Activated naive CD4-positive, alpha-beta T cell treated with anti-CD3 and anti-CD28 coated beads for 36 hours (primary cell): ENCODE measurements at regions of chr11 and their contacts with region 1.

Region 1: DNA sequence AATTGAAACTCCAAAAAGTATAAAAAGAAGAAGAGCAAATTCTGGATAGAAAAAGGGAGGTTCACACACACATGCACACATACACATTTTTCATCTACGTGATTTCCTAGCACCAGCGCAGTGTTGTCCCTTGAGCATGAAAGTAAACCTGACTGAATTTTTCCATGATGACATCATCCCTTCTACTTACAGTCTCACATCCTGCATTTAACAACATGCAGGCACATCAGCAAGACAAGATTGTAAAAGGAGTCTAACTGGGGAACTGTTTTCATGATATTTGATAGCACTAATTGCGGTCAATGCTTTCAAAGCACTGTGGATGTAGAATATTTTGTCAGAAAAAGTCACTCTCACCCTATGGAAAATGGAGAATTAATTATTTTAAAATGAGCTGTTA is 36.6 kb downstream of the GAS2 start:
- DNase-seq: peak; percentile 57
- H3K4me3 Mint-ChIP-seq: no peak overlapping the region
- H3K27ac Mint-ChIP-seq: peak overlapping the region; percentile 78
- H3K4me1 Mint-ChIP-seq: peaks cover 24% of the 10 kb centered on the region
- H3K27me3 Mint-ChIP-seq: no peaks in the 10 kb centered on the region

Region 2: GRCh38 chr11:22634897-22635629 is 68.0 kb before region 1 on chr11:
- CTCF ChIA-PET with region 1: no interaction called
- intact Hi-C with region 1: no loop called
- DNase-seq: no peak
- H3K4me3 Mint-ChIP-seq: no peak overlapping the region
- H3K27ac Mint-ChIP-seq: no peak overlapping the region
- H3K4me1 Mint-ChIP-seq: no peaks in the 10 kb centered on the region
- H3K27me3 Mint-ChIP-seq: peaks cover 3% of the 10 kb centered on the region

Region 3: GRCh38 chr11:22657101-22657694 is 45.8 kb before region 1 on chr11:
- CTCF ChIA-PET with region 1: interaction called, 3 read pairs
- intact Hi-C with region 1: loop called (anchors 1 kb)
- DNase-seq: peak; percentile 17
- H3K4me3 Mint-ChIP-seq: no peak overlapping the region
- H3K27ac Mint-ChIP-seq: peak overlapping the region; percentile 47
- H3K4me1 Mint-ChIP-seq: peaks cover 18% of the 10 kb centered on the region
- H3K27me3 Mint-ChIP-seq: no peaks in the 10 kb centered on the region

Region 4: DNA sequence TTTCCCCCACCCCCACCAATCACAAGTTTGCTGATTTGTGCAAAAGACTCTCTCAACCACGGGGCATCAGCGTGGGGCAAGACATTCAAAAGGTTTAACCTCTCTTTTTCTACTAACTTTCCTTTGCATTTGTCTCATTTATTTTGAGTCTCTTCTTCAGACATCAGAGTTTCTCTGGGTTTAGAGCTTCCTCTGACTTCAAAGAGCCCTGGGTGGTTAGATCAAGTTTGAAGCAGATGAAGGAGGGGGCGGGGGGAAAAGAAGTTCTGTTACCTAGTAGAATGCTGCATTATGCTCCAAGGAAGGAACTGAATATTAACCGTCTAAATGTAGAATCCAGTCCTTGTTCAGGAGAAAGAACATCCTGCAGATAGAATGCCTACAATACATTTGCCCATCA is 12.2 kb before region 1 on chr11:
- CTCF ChIA-PET with region 1: interaction called, 3 read pairs
- intact Hi-C with region 1: loop called (anchors 1 kb)
- DNase-seq: peak; percentile 55
- H3K4me3 Mint-ChIP-seq: peak overlapping the region; percentile 52
- H3K27ac Mint-ChIP-seq: peak overlapping the region; percentile 65
- H3K4me1 Mint-ChIP-seq: peaks cover 16% of the 10 kb centered on the region
- H3K27me3 Mint-ChIP-seq: no peaks in the 10 kb centered on the region

Region 5: GRCh38 chr11:22730319-22730718 is 27.3 kb after region 1 on chr11:
- CTCF ChIA-PET with region 1: no interaction called
- intact Hi-C with region 1: no loop called
- DNase-seq: peak; percentile 11
- H3K4me3 Mint-ChIP-seq: no peak overlapping the region
- H3K27ac Mint-ChIP-seq: no peak overlapping the region
- H3K4me1 Mint-ChIP-seq: no peaks in the 10 kb centered on the region
- H3K27me3 Mint-ChIP-seq: no peaks in the 10 kb centered on the region

Region 6: DNA sequence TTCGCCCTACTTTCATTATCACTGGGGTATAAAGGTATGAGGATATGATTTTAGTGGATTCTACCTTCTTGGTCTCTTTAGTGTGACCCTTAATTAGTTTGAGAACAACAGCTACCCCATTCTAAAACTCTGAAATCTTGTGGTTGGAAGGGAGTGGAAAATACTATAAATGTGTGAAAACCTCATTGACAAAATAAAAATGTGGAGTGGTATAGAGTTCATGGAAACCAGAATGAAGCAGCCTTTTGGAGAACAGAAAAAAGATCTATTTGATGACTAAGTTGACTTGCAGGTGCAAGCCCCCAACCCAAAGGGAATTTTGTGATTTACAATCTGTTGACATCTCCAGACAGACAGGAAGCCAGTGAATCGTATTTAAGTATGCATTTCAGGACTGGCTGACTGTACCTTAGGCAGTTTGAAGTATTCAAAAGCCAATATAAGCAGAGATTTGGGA is 39.1 kb after region 1 on chr11:
- CTCF ChIA-PET with region 1: no interaction called
- intact Hi-C with region 1: loop called (anchors 1 kb)
- DNase-seq: peak; percentile 11
- H3K4me3 Mint-ChIP-seq: no peak overlapping the region
- H3K27ac Mint-ChIP-seq: peak overlapping the region; percentile 39
- H3K4me1 Mint-ChIP-seq: peaks cover 6% of the 10 kb centered on the region
- H3K27me3 Mint-ChIP-seq: peaks cover 18% of the 10 kb centered on the region

Region 7: GRCh38 chr11:22752908-22753310 is 49.9 kb after region 1 on chr11:
- CTCF ChIA-PET with region 1: no interaction called
- intact Hi-C with region 1: no loop called
- DNase-seq: no peak
- H3K4me3 Mint-ChIP-seq: no peak overlapping the region
- H3K27ac Mint-ChIP-seq: no peak overlapping the region
- H3K4me1 Mint-ChIP-seq: peaks cover 8% of the 10 kb centered on the region
- H3K27me3 Mint-ChIP-seq: no peaks in the 10 kb centered on the region

Region 8: GRCh38 chr11:22920939-22921565 is 218.0 kb after region 1 on chr11:
- CTCF ChIA-PET with region 1: no interaction called
- intact Hi-C with region 1: no loop called
- DNase-seq: peak; percentile 19
- H3K4me3 Mint-ChIP-seq: no peak overlapping the region
- H3K27ac Mint-ChIP-seq: no peak overlapping the region
- H3K4me1 Mint-ChIP-seq: peaks cover 6% of the 10 kb centered on the region
- H3K27me3 Mint-ChIP-seq: no peaks in the 10 kb centered on the region